Common myeloid progenitor, CD34-positive (primary cell): ENCODE measurements at regions of chr4 and their contacts with region 1.

Region 1: GRCh38 chr4:83284193-83285054 is at the start of gene COQ2:
- DNase-seq: peak; percentile 95
- H3K4me3 ChIP-seq: peak within 1 kb of the TSS; percentile 68 to 88 (median 84)
- H3K27ac ChIP-seq: peak within 1 kb of the TSS; percentile 94 to 96
- H3K4me1 ChIP-seq: peaks cover 19 to 51% (median 39%) of the 10 kb centered on the region in 4 experiments
- H3K27me3 ChIP-seq: no peaks in the 10 kb centered on the region

Region 2: DNA sequence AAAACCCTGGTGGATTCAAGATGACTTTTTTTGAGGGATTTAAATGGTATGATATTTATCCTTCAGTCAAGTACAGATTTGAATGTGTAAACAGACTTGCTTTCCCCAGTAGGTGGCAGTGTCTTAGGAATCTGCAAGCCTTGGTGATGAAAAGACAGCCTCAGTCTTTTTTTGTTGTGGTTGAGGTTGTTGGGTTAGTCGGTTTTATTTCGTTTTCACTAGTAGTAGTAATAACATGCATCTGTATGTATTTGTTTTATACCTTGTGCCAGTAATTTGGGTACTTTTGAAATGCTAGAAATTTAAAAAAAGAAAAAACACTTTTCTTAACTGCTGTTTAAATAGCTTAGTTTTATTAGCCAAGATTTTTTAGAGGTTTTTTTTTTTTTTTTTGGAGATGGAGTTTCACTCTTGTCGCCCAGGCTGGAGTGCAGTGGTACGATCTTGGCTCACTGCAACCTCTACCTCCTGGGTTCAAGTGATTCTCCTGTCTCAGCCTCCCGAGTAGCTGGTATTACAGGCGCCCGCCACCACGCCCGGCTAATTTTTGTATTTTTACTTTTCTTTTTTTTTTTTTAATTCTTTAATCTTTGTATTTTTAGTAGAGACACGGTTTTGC is 210.2 kb before region 1 on chr4:
- CTCF ChIA-PET with region 1: interaction called, 30 read pairs
- POLR2A ChIA-PET with region 1: no interaction called
- DNase-seq: peak; percentile 91 to 95 (median 95)
- H3K4me3 ChIP-seq: no peak overlapping the region
- H3K27ac ChIP-seq: no peak overlapping the region
- H3K4me1 ChIP-seq: peaks cover 3 to 15% (median 12%) of the 10 kb centered on the region in 4 experiments
- H3K27me3 ChIP-seq: no peaks in the 10 kb centered on the region

Region 3: GRCh38 chr4:83259586-83259985 is 24.8 kb before region 1 on chr4:
- CTCF ChIA-PET with region 1: interaction called, 13 read pairs
- POLR2A ChIA-PET with region 1: no interaction called
- DNase-seq: no peak
- H3K4me3 ChIP-seq: no peak overlapping the region
- H3K27ac ChIP-seq: no peak overlapping the region
- H3K4me1 ChIP-seq: peaks cover 0 to 6% (median 4%) of the 10 kb centered on the region in 4 experiments
- H3K27me3 ChIP-seq: no peaks in the 10 kb centered on the region

Region 4: DNA sequence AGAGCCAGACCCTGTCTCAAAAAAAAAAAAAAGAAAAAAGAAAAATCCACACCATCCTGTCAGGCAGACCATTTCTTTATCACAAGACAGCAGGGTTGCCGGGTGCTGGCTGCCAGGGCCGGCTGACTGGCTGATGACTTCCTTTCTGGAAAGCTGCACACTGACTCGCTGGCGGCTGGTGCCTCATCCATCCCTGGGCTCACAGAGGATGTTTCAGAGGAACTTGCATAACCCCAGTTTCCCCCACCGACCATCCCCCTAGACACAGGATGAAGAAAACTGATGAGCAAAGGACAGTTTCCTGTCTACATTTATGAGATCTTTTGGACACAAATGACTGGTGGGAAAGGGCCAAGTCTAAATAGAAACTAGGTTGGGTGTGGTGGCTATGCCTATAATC is 36.1 kb after region 1 on chr4:
- CTCF ChIA-PET with region 1: interaction called, 50 read pairs
- POLR2A ChIA-PET with region 1: interaction called, 7 read pairs
- DNase-seq: peak; percentile 75 to 96 (median 95)
- H3K4me3 ChIP-seq: peak overlapping the region in 3 of 7 experiments; percentile 8 to 31 (median 28)
- H3K27ac ChIP-seq: peak overlapping the region in 1 of 2 experiments; percentile 58
- H3K4me1 ChIP-seq: peaks cover 11 to 65% (median 50%) of the 10 kb centered on the region in 4 experiments
- H3K27me3 ChIP-seq: no peaks in the 10 kb centered on the region

Region 5: DNA sequence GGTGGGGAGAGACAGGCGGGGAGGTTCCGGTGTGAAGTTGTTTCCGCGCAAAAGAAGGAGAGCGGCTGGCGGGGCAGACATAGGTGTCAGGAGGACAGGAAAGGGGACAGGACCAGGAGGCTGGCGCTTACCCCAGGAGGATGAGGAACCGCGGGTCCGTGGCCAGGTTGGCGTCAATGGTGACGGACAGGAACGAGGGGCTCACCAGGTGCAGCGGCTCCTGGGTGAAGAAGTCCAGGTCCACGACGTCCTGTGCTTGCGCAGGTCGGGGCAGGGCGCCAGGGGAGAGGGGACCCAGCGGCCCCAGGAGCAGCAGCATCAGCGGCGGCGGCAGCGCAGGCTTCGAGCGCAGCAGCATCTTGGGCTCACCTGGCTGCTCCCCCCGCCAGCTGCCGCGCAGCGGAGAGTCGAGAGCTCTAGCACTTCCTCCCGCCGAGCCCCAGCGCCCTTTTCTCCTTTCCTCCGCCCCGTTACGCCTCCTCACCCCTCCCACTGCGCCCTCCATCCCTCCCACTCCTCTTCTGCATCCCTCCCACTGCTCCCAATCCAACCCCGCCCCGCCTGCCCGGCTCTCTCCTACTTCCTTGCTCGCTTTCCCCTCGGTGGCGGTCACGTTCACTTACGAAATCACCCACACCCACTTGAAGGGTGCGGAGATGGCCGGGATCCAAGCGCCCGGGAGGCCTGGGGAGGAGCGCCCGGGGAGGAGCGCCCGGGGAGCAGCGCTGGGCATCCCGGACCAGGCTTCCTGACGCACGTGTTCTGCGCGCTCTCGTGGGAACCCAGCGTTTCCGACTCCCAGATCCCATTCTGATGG is 50.2 kb after region 1 on chr4 and contains the start of gene HPSE:
- CTCF ChIA-PET with region 1: interaction called, 20 read pairs
- POLR2A ChIA-PET with region 1: interaction called, 6 read pairs
- DNase-seq: peak in 2 of 3 donors; percentile 56 to 71
- H3K4me3 ChIP-seq: peak within 1 kb of the TSS; percentile 37 to 78 (median 61)
- H3K27ac ChIP-seq: no peak within 1 kb of the TSS
- H3K4me1 ChIP-seq: peaks cover 2 to 35% (median 30%) of the 10 kb centered on the region in 4 experiments
- H3K27me3 ChIP-seq: peaks cover 0 to 4% (median 0%) of the 10 kb centered on the region in 5 experiments